MCF 10A (cell line): ENCODE measurements at regions of chr3 and their contacts with region 1.

Region 1: DNA sequence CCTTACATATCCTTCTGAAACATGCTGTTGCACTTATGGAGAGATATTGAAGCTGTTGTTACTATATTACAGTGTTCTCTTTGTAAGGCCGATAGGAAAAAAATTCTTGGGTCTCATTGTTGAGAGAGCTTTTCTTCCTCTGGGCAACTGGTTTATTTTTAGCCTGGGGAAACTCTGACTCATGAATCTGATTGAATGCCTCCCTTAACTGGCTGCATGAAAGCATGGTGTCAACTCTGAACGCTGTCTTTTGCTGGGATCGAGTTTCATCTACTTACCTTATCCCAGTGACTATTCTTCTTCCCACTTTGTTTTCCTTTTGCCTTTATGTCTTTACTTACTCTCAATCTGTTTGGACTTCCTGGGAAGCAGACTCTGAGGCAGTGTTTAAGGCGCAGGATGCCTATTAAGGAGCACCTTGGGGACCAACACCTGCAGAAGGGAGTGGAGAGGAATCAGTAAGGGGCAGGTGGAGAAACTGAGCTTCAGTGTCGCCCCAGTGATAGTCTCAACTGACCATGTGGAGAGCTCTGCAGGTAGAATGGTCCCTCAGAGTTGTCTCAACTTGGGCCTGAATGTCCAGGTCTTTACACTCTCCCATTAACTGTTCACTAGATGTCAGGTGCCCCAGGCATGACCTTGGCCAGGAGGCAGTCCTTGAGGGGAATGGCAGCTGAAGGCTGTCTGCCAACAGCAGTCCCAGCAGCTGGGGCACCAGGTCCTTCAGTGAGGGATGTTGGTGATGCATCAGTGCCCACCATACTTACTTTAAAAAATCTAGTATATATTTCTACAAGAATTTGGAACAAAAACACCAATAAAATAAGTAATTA is 88.9 kb upstream of the CCNL1 start:
- DNase-seq: peak; percentile 81
- H3K4me3 Mint-ChIP-seq: no peak overlapping the region
- H3K27ac Mint-ChIP-seq: no peak overlapping the region
- H3K4me1 Mint-ChIP-seq: peaks cover 6% of the 10 kb centered on the region
- H3K27me3 Mint-ChIP-seq: no peaks in the 10 kb centered on the region
- CTCF ChIP-seq: no peak

Region 2: GRCh38 chr3:157354722-157355121 is 105.9 kb after region 1 on chr3:
- CTCF ChIA-PET with region 1: interaction called, 3 read pairs
- POLR2A ChIA-PET with region 1: no interaction called
- intact Hi-C with region 1: loop called (anchors 10 kb)
- DNase-seq: peak; percentile 56
- H3K4me3 Mint-ChIP-seq: no peak overlapping the region
- H3K27ac Mint-ChIP-seq: no peak overlapping the region
- H3K4me1 Mint-ChIP-seq: peaks cover 30% of the 10 kb centered on the region
- H3K27me3 Mint-ChIP-seq: no peaks in the 10 kb centered on the region
- CTCF ChIP-seq: peak; percentile 44